Activated T-helper 1 cell treated with anti-CD3 and anti-CD28 coated beads, Interleukin-12 subunit alpha, Interleukin-12 subunit beta, Interleukin-2, Interleukin-4 antibody, amounts not matched to agents 30 ng/mL and 10 ng/mL and 1 ng/mL, durations not matched to agents 14 hours and 24 hours and 36 hours (primary cell): ENCODE measurements at regions of chr6 and their contacts with region 1.

Region 1: DNA sequence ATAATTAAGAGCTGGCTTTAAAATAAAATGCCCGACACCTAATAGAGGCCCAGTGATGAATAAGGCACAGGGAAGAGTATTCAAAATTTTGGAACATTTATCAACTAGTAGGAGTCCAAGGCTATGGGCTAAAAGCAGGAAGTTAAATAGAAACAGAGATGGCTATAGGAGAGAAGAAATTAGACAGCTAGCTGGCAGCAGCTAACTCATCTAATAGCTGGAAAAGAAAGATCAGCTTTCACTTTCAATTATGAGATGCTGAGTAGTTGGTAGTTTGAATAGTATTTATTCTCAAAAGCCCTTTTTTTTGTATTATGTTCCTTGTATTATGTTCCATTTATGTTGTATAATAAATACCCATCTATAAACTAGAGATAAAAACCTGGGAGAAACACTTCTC is 215.7 kb downstream of the SLC35F1 start:
- DNase-seq: no peak
- H3K4me3 Mint-ChIP-seq: no peak overlapping the region
- H3K27ac Mint-ChIP-seq: no peak overlapping the region
- H3K4me1 Mint-ChIP-seq: no peaks in the 10 kb centered on the region
- H3K27me3 Mint-ChIP-seq: peaks cover 3% of the 10 kb centered on the region

Region 2: GRCh38 chr6:118187568-118188164 is 64.9 kb after region 1 on chr6:
- intact Hi-C with region 1: loop called (anchors 2 kb)
- DNase-seq: no peak
- H3K4me3 Mint-ChIP-seq: no peak overlapping the region
- H3K27ac Mint-ChIP-seq: peak overlapping the region; percentile 61
- H3K4me1 Mint-ChIP-seq: peaks cover 12% of the 10 kb centered on the region
- H3K27me3 Mint-ChIP-seq: peaks cover 3% of the 10 kb centered on the region